MCF 10A (cell line): ENCODE measurements at regions of chr6 and their contacts with region 1.

Region 1: DNA sequence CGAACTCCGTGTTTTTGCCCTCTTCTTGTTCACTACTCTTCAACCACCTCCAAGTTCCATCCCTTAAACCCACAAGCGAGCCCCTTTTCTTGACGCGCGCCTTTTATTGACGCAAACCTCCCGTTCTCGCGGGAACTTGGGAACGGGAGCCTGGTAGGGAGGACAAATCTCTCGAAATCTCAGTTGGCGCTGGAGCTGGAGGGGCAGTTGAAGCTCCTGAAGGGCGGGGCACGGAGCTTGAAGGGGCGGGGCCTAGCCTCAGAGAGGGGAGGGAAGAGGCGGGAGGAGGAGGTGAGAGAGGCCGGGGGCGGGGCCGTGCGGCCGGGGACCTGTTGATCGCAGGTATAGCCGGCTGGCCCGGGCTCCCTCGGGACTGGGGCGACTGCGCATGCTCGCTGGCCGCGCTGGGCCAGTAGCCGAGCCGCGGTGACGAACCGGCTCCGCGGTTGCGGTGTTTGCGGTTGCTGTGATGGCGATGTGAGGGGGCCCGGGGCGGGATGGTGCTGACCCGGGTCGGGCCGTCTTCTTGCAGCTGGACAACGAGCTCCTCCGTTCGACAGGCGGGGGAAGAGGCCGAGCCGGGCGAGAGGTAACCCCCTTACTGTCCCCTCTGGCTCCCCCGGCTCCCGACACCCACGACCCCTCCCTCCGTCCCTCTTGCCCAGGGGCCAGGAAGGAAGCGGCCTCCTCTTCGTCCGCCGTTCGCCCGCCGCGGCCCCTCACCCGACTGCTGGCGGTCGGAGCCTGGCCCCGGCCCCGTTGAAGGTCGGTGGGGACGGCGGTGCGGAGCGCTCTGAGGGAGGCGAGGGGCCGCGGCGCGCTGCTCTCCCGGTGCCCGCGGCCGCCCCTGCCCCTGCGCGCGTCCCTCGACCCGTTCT is at the start of gene FAM135A:
- DNase-seq: peak; percentile 99
- H3K4me3 Mint-ChIP-seq: peak within 1 kb of the TSS; percentile 92
- H3K27ac Mint-ChIP-seq: peak within 1 kb of the TSS; percentile 75
- H3K4me1 Mint-ChIP-seq: no peaks in the 10 kb centered on the region
- H3K27me3 Mint-ChIP-seq: no peaks in the 10 kb centered on the region
- CTCF ChIP-seq: no peak
- total RNA-seq, gene FAM135A: 20.4 and 22.0 TPM in 2 replicates

Region 2: DNA sequence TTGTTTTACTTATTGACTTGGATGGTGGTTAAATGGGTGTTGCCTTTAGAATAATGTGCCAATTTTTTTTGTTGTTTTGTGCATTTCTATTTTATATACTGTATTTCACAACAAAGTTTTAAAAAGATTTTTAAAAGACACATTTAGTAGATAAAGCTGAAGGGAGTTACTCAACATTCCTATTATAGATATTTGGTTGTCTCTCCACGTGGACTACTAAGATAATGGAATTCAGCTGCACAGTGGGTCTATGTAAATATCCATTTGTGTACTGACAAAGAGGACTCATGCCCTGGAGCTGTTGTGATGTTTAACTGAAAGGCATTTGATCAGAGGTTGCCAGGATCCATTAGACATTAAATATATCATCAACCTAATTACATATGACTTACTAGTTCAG is 23.3 kb before region 1 on chr6:
- CTCF ChIA-PET with region 1: interaction called, 4 read pairs
- POLR2A ChIA-PET with region 1: interaction called, 22 read pairs
- intact Hi-C with region 1: no loop called
- DNase-seq: no peak
- H3K4me3 Mint-ChIP-seq: no peak overlapping the region
- H3K27ac Mint-ChIP-seq: no peak overlapping the region
- H3K4me1 Mint-ChIP-seq: no peaks in the 10 kb centered on the region
- H3K27me3 Mint-ChIP-seq: no peaks in the 10 kb centered on the region
- CTCF ChIP-seq: no peak

Region 3: GRCh38 chr6:70667711-70668498 is 254.6 kb after region 1 on chr6 and contains the start of gene SMAP1:
- CTCF ChIA-PET with region 1: interaction called, 4 read pairs
- POLR2A ChIA-PET with region 1: interaction called, 22 read pairs
- intact Hi-C with region 1: no loop called
- DNase-seq: peak; percentile 91
- H3K4me3 Mint-ChIP-seq: peak within 1 kb of the TSS; percentile 90
- H3K27ac Mint-ChIP-seq: peak within 1 kb of the TSS; percentile 89
- H3K4me1 Mint-ChIP-seq: peaks cover 35% of the 10 kb centered on the region
- H3K27me3 Mint-ChIP-seq: no peaks in the 10 kb centered on the region
- CTCF ChIP-seq: no peak
- total RNA-seq, gene SMAP1: 26.5 and 28.2 TPM in 2 replicates